MCF 10A (cell line): ENCODE measurements at regions of chr22 and their contacts with region 1.

Region 1: DNA sequence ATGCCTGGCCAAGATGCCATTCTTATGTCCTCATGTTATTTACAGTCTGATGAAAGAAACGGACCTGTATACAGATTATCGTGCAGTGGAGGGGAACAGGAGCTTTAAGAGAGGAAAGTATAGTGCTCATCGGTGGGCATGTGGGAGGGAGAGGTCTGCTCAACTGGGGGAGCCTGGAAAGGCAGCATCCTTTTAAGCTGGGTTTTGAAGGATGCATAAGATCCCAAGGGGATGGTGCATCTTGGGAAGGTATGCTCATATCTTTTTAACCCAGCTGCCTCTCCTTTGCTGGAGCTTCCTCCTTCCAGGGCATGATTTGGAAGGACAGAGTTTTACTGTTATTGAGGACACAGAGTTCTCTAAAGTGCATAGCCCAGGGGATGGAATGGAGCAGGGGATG is 34.8 kb downstream of the MIAT start:
- DNase-seq: no peak
- H3K4me3 Mint-ChIP-seq: no peak overlapping the region
- H3K27ac Mint-ChIP-seq: no peak overlapping the region
- H3K4me1 Mint-ChIP-seq: no peaks in the 10 kb centered on the region
- H3K27me3 Mint-ChIP-seq: no peaks in the 10 kb centered on the region
- CTCF ChIP-seq: no peak

Region 2: GRCh38 chr22:26679003-26679629 is 13.1 kb before region 1 on chr22:
- CTCF ChIA-PET with region 1: interaction called, 11 read pairs
- POLR2A ChIA-PET with region 1: interaction called, 3 read pairs
- intact Hi-C with region 1: no loop called
- DNase-seq: peak; percentile 68
- H3K4me3 Mint-ChIP-seq: no peak overlapping the region
- H3K27ac Mint-ChIP-seq: no peak overlapping the region
- H3K4me1 Mint-ChIP-seq: peaks cover 13% of the 10 kb centered on the region
- H3K27me3 Mint-ChIP-seq: no peaks in the 10 kb centered on the region
- CTCF ChIP-seq: peak; percentile 89